RWPE1 (cell line): ENCODE measurements at regions of chr20 and their contacts with region 1.

Region 1: GRCh38 chr20:47544852-47545251 is 43.2 kb downstream of the NCOA3 start:
- DNase-seq: no peak
- H3K27ac ChIP-seq: no peak overlapping the region
- CTCF ChIP-seq: no peak

Region 2: DNA sequence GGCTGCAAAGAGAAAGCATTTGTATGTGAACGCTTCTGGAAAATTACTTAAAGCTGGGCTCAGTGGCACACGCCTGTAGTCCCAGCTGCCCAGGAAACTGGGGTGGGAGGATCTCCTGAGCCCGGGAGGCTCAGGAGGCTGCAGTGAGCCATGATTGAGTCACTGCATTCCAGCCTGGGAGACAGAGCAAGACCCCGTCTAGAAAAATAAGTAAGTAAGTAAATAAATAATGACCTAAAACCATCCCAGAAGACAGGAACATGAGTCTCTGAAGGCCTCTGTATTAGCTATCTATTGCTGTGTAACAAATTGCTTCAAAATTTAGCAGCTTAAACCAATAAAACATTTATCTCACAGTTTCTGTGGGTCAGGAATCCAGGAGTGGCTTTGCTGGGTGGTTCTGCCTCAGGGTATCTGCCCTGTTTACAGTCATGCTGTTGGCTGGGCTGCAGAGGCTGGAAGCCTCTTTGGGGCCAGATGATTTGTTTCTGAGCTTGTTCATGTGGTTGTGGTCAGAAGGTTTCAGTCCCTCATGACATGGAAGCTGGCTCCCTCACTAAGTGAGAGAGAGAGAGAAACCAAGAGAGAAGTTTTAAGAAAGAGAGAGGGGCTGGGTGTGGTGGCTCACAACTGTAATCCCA is 91.6 kb before region 1 on chr20:
- CTCF ChIA-PET with region 1: no interaction called
- POLR2A ChIA-PET with region 1: no interaction called
- DNase-seq: peak; percentile 86
- H3K27ac ChIP-seq: peak overlapping the region; percentile 86
- CTCF ChIP-seq: no peak

Region 3: GRCh38 chr20:47509104-47509661 is 35.7 kb before region 1 on chr20:
- CTCF ChIA-PET with region 1: no interaction called
- POLR2A ChIA-PET with region 1: interaction called, 10 read pairs
- DNase-seq: no peak
- H3K27ac ChIP-seq: no peak overlapping the region
- CTCF ChIP-seq: no peak

Region 4: GRCh38 chr20:47524015-47524784 is 20.7 kb before region 1 on chr20:
- CTCF ChIA-PET with region 1: no interaction called
- POLR2A ChIA-PET with region 1: no interaction called
- DNase-seq: no peak
- H3K27ac ChIP-seq: no peak overlapping the region
- CTCF ChIP-seq: no peak

Region 5: DNA sequence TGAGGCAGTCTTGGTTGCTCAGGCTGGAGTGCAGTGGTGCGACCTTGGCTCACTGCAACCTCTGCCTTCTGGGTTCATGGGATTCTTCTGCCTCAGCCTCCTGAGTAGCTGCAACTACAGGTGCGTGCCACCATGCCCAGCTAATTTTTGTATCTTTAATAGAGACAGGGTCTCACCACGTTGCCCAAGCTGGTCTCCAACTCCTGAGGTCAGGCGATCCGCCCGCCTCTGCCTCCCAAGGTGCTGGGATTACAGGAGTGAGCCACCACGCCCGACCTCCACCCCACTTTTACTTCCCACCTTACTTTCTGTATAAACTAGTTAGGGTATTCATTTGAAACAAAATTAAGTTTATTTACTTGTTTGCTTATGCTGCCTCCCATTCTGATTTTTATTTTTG is 43.3 kb after region 1 on chr20:
- CTCF ChIA-PET with region 1: no interaction called
- POLR2A ChIA-PET with region 1: no interaction called
- DNase-seq: no peak
- H3K27ac ChIP-seq: no peak overlapping the region
- CTCF ChIP-seq: no peak

Region 6: DNA sequence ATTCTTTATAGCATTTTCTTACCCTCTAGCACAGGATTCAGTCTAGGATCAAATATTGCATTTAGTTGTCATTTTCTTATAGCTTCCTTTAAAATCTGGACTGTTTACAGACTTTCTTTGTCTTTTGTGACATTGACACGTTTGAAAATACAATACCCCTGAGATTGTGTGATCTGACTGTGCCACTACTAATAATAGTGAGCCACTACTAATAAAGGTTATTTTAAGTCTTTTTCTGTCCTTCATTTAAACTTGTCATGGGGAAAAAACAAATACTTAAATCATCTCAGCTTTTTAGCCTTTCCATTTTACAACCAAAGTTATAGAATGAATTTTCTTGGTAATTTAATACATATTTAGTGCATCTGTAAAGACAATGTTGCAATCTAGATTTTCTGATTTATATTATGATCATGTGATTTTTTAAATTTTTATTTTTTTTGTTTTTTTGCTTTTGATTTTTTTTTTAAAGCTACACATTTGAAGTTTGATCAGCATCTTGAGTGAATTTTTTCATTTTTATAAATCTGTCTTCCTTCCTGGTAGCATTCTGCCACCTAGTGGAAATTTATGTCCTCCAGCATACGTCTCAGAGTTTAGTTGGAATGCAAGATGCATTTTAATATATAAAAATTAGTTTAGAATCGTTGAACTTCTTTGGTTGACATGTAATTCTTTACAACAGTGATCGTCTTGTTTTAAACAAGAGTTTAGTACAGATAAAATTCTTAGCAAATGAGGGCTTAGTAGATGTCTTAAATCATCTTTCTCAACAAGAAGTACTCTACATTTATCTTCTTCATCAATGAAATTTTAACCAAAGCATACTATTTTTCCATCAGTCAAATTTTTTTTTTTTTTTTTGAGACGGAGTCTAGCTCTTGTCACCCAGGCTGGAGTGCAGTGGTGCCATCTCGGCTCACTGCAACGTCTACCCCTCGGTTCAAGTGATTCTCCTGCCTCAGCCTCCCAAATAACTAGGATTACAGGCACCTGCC is 76.3 kb after region 1 on chr20:
- CTCF ChIA-PET with region 1: interaction called, 13 read pairs
- POLR2A ChIA-PET with region 1: no interaction called
- DNase-seq: peak; percentile 64
- H3K27ac ChIP-seq: no peak overlapping the region
- CTCF ChIP-seq: peak; percentile 99